ENCODE measurements at regions of chr17 and their contacts with region 1.

Region 1: GRCh38 chr17:58517734-58518609 is 3.5 kb upstream of the MTMR4 start:
- DNase-seq: peak; percentile 100
- ATAC-seq: peak; percentile 73
- H3K4me3 ChIP-seq: peak overlapping the region; percentile 83
- H3K27ac ChIP-seq: peak overlapping the region; percentile 63
- H3K4me1 ChIP-seq: peaks cover 24% of the 10 kb centered on the region
- H3K27me3 ChIP-seq: no peaks in the 10 kb centered on the region
- CTCF ChIP-seq: no peak

Region 2: GRCh38 chr17:58447039-58447975 is 70.7 kb before region 1 on chr17:
- CTCF ChIA-PET with region 1: interaction called, 10 read pairs
- POLR2A ChIA-PET with region 1: no interaction called
- intact Hi-C with region 1: no loop called
- DNase-seq: peak; percentile 97
- ATAC-seq: peak; percentile 100
- H3K4me3 ChIP-seq: no peak overlapping the region
- H3K27ac ChIP-seq: no peak overlapping the region
- H3K4me1 ChIP-seq: no peaks in the 10 kb centered on the region
- H3K27me3 ChIP-seq: peaks cover 9% of the 10 kb centered on the region; the same call in 1 of the 2 replicates
- CTCF ChIP-seq: peak; percentile 96

Region 3: GRCh38 chr17:58492238-58493121 is 25.5 kb before region 1 on chr17:
- CTCF ChIA-PET with region 1: no interaction called
- POLR2A ChIA-PET with region 1: no interaction called
- intact Hi-C with region 1: no loop called
- DNase-seq: peak; percentile 77
- ATAC-seq: peak; percentile 45
- H3K4me3 ChIP-seq: no peak overlapping the region
- H3K27ac ChIP-seq: peak overlapping the region; percentile 33
- H3K4me1 ChIP-seq: peaks cover 8% of the 10 kb centered on the region
- H3K27me3 ChIP-seq: no peaks in the 10 kb centered on the region
- CTCF ChIP-seq: no peak

Region 4: GRCh38 chr17:58587702-58588254 is 69.8 kb after region 1 on chr17:
- CTCF ChIA-PET with region 1: interaction called, 3 read pairs
- POLR2A ChIA-PET with region 1: no interaction called
- intact Hi-C with region 1: loop called (anchors 1 kb)
- DNase-seq: peak; percentile 84
- ATAC-seq: peak; percentile 97
- H3K4me3 ChIP-seq: no peak overlapping the region
- H3K27ac ChIP-seq: no peak overlapping the region
- H3K4me1 ChIP-seq: no peaks in the 10 kb centered on the region
- H3K27me3 ChIP-seq: 0 out of 2 replicates have a peak, but pooled peaks cover 4% of the 10 kb centered on the region
- CTCF ChIP-seq: peak; percentile 98

Region 5: GRCh38 chr17:58692239-58693055 is 174.5 kb after region 1 on chr17 and contains the start of gene RAD51C:
- CTCF ChIA-PET with region 1: no interaction called
- POLR2A ChIA-PET with region 1: no interaction called
- intact Hi-C with region 1: loop called (anchors 5 kb)
- DNase-seq: peak; percentile 94
- ATAC-seq: peak; percentile 99
- H3K4me3 ChIP-seq: peak within 1 kb of the TSS; percentile 76
- H3K27ac ChIP-seq: peak within 1 kb of the TSS; percentile 46
- H3K4me1 ChIP-seq: peaks cover 23% of the 10 kb centered on the region
- H3K27me3 ChIP-seq: no peaks in the 10 kb centered on the region
- CTCF ChIP-seq: no peak
- total RNA-seq, gene RAD51C: 58.9 and 71.1 TPM in 2 replicates

Region 6: GRCh38 chr17:59004338-59005111 is 486.6 kb after region 1 on chr17:
- CTCF ChIA-PET with region 1: interaction called, 7 read pairs
- POLR2A ChIA-PET with region 1: no interaction called
- intact Hi-C with region 1: loop called (anchors 1 kb)
- DNase-seq: peak; percentile 82
- ATAC-seq: peak; percentile 70
- H3K4me3 ChIP-seq: no peak overlapping the region
- H3K27ac ChIP-seq: no peak overlapping the region
- H3K4me1 ChIP-seq: 0 out of 2 replicates have a peak, but pooled peaks cover 6% of the 10 kb centered on the region
- H3K27me3 ChIP-seq: no peaks in the 10 kb centered on the region
- CTCF ChIP-seq: peak; percentile 98

Measured in PC-3 (cell line).